ENCODE measurements at regions of chr14 and their contacts with region 1.

Region 1: GRCh38 chr14:75982266-75983018 is 647 bp upstream of the TGFB3 start:
- DNase-seq: peak; percentile 85
- H3K4me3 ChIP-seq: peak overlapping the region; percentile 87
- H3K27ac ChIP-seq: peak overlapping the region; percentile 95
- H3K4me1 ChIP-seq: peaks cover 83% of the 10 kb centered on the region
- H3K27me3 ChIP-seq: no peaks in the 10 kb centered on the region
- CTCF ChIP-seq: peak; percentile 75

Region 2: GRCh38 chr14:75689012-75689411 is 293.4 kb before region 1 on chr14:
- intact Hi-C with region 1: no loop called
- DNase-seq: peak; percentile 37
- H3K4me3 ChIP-seq: no peak overlapping the region
- H3K27ac ChIP-seq: no peak overlapping the region
- H3K4me1 ChIP-seq: no peaks in the 10 kb centered on the region
- H3K27me3 ChIP-seq: no peaks in the 10 kb centered on the region
- CTCF ChIP-seq: no peak

Region 3: DNA sequence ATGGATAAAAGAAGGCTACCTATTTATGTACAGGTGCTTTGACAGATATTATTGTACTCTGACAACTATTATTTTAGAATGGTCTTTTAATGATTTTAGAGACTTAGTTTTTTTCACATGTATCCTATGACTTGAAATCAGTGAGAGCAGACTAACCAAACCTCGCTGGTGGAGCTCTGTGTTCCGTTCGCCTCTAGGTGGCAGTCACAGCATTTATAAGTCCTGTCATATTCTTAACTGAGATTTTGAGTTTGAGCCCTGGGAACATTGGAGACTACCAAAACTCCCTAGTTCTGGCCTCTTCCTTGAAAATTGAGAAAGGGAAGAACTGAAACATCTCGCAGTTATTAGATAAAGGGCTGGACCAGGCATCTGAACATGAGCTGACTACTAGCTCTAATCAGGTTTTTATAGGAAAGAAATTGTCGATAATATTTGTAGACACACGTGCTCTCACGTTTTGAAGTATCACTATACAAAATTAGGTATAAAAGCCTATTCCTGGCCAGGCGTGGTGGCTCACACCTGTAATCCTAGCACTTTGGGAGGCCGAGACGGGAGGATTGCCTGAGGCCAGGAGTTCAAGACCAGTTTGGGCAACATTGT is 273.1 kb before region 1 on chr14:
- intact Hi-C with region 1: loop called (anchors 10 kb)
- DNase-seq: peak; percentile 64
- H3K4me3 ChIP-seq: no peak overlapping the region
- H3K27ac ChIP-seq: no peak overlapping the region
- H3K4me1 ChIP-seq: peaks cover 28% of the 10 kb centered on the region
- H3K27me3 ChIP-seq: no peaks in the 10 kb centered on the region
- CTCF ChIP-seq: peak; percentile 88

Region 4: GRCh38 chr14:75906676-75907280 is 75.7 kb before region 1 on chr14:
- intact Hi-C with region 1: loop called (anchors 5 kb)
- DNase-seq: no peak
- H3K4me3 ChIP-seq: no peak overlapping the region
- H3K27ac ChIP-seq: peak overlapping the region; percentile 21
- H3K4me1 ChIP-seq: peaks cover 16% of the 10 kb centered on the region
- H3K27me3 ChIP-seq: no peaks in the 10 kb centered on the region
- CTCF ChIP-seq: peak; percentile 94

Region 5: GRCh38 chr14:75928690-75929181 is 53.7 kb before region 1 on chr14:
- intact Hi-C with region 1: no loop called
- DNase-seq: no peak
- H3K4me3 ChIP-seq: peak overlapping the region; percentile 16
- H3K27ac ChIP-seq: peak overlapping the region; percentile 33
- H3K4me1 ChIP-seq: peaks cover under 1% of the 10 kb centered on the region
- H3K27me3 ChIP-seq: no peaks in the 10 kb centered on the region
- CTCF ChIP-seq: no peak

Region 6: GRCh38 chr14:76168531-76168930 is 186.1 kb after region 1 on chr14:
- intact Hi-C with region 1: no loop called
- DNase-seq: no peak
- H3K4me3 ChIP-seq: no peak overlapping the region
- H3K27ac ChIP-seq: no peak overlapping the region
- H3K4me1 ChIP-seq: peaks cover 14% of the 10 kb centered on the region
- H3K27me3 ChIP-seq: no peaks in the 10 kb centered on the region
- CTCF ChIP-seq: no peak